Activated CD8-positive, alpha-beta T cell treated with anti-CD3 and anti-CD28 coated beads for 36 hours (primary cell): ENCODE measurements at regions of chr2 and their contacts with region 1.

Region 1: GRCh38 chr2:10434886-10435819 is 13.0 kb downstream of the ODC1 start:
- DNase-seq: peak; percentile 81
- ATAC-seq: peak; percentile 77
- H3K4me3 Mint-ChIP-seq: no peak overlapping the region
- H3K27ac Mint-ChIP-seq: no peak overlapping the region
- H3K4me1 Mint-ChIP-seq: peaks cover 11% of the 10 kb centered on the region
- H3K27me3 Mint-ChIP-seq: peaks cover 9% of the 10 kb centered on the region
- CTCF ChIP-seq: peak; percentile 88

Region 2: GRCh38 chr2:9984217-9984739 is 450.9 kb before region 1 on chr2:
- CTCF ChIA-PET with region 1: interaction called, 12 read pairs
- POLR2A ChIA-PET with region 1: no interaction called
- intact Hi-C with region 1: no loop called
- DNase-seq: peak; percentile 30
- ATAC-seq: peak; percentile 93
- H3K4me3 Mint-ChIP-seq: no peak overlapping the region
- H3K27ac Mint-ChIP-seq: no peak overlapping the region
- H3K4me1 Mint-ChIP-seq: peaks cover 12% of the 10 kb centered on the region
- H3K27me3 Mint-ChIP-seq: peaks cover 12% of the 10 kb centered on the region
- CTCF ChIP-seq: peak; percentile 91

Region 3: GRCh38 chr2:10097352-10098148 is 337.6 kb before region 1 on chr2:
- CTCF ChIA-PET with region 1: interaction called, 12 read pairs
- POLR2A ChIA-PET with region 1: no interaction called
- intact Hi-C with region 1: no loop called
- DNase-seq: peak; percentile 48
- ATAC-seq: peak; percentile 88
- H3K4me3 Mint-ChIP-seq: no peak overlapping the region
- H3K27ac Mint-ChIP-seq: no peak overlapping the region
- H3K4me1 Mint-ChIP-seq: no peaks in the 10 kb centered on the region
- H3K27me3 Mint-ChIP-seq: peaks cover 17% of the 10 kb centered on the region
- CTCF ChIP-seq: peak; percentile 91

Region 4: GRCh38 chr2:10135296-10136089 is 299.7 kb before region 1 on chr2:
- CTCF ChIA-PET with region 1: interaction called, 45 read pairs
- POLR2A ChIA-PET with region 1: interaction called, 8 read pairs
- intact Hi-C with region 1: loop called (anchors 5 kb)
- DNase-seq: no peak
- ATAC-seq: peak; percentile 25
- H3K4me3 Mint-ChIP-seq: no peak overlapping the region
- H3K27ac Mint-ChIP-seq: no peak overlapping the region
- H3K4me1 Mint-ChIP-seq: peaks cover 11% of the 10 kb centered on the region
- H3K27me3 Mint-ChIP-seq: no peaks in the 10 kb centered on the region
- CTCF ChIP-seq: no peak

Region 5: DNA sequence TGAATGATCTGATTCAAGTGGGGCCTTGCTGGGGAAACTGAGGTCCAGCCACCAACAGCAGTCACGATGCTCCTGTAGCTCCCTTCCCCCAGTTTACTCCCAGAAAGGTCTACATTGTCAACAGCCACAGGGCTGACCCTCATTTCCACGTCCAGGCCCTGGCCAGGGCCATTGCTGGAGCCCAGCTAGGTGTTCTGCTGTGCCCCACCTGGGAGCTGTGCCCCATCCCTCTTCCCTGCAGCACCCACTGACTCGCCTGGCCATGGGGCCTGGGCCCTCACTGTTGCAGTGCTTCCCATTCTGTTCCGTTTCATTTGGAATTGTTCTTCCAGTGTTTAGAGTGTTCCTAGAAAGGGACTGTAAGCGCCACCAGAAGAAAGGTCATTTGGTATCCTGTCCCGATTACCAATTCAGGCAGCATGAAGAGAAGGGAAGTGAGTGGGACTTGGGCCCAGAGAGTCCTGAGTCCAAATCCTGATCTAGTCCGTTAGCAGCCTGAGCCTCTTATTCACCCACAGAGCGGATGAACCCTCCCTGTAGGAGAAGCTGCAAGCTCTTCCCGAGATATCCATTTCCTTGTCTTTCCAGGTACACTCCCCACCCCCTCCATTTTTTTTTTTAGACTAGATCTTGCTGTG is 205.6 kb before region 1 on chr2:
- CTCF ChIA-PET with region 1: interaction called, 13 read pairs
- POLR2A ChIA-PET with region 1: no interaction called
- intact Hi-C with region 1: no loop called
- DNase-seq: no peak
- ATAC-seq: no peak
- H3K4me3 Mint-ChIP-seq: no peak overlapping the region
- H3K27ac Mint-ChIP-seq: no peak overlapping the region
- H3K4me1 Mint-ChIP-seq: peaks cover 6% of the 10 kb centered on the region
- H3K27me3 Mint-ChIP-seq: no peaks in the 10 kb centered on the region
- CTCF ChIP-seq: no peak

Region 6: DNA sequence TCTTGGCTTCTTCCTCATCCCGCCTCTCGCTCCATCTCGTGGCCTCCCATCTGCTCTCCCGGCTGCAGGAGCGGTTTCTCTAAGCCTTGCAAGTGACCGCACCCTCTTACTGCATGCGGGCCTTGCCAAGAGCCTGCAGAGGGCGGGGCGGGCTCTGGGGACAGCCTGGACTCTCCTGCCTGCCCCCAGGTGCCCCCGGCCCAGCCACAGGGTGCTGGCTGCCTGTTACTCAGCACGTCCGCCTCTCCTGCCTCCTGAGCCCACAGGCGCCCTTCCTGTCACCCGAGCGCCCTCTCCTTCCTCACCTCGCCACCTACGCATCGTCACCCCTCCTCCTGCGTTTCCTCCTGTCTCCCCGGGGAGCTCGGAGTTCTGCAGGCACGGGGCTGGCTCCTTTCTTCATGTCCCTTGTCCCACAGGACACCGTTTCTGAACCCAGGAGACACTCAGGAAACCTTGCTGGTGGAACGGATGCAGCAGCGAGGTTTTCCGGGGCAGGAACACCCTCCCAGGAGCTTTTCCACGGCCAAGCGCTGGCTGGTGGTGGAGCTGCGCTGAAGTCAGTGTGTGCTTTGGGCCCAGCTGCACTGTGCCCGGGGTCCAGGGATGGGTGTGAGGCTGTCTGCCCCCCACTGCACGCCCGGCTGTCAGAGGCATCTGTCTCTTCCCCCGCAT is 104.0 kb before region 1 on chr2:
- CTCF ChIA-PET with region 1: interaction called, 15 read pairs
- POLR2A ChIA-PET with region 1: interaction called, 3 read pairs
- intact Hi-C with region 1: no loop called
- DNase-seq: peak; percentile 92
- ATAC-seq: peak; percentile 55
- H3K4me3 Mint-ChIP-seq: peak overlapping the region; percentile 94
- H3K27ac Mint-ChIP-seq: peak overlapping the region; percentile 91
- H3K4me1 Mint-ChIP-seq: peaks cover 83% of the 10 kb centered on the region
- H3K27me3 Mint-ChIP-seq: no peaks in the 10 kb centered on the region
- CTCF ChIP-seq: no peak

Region 7: GRCh38 chr2:10424051-10424450 is 11.1 kb before region 1 on chr2:
- CTCF ChIA-PET with region 1: interaction called, 13 read pairs
- POLR2A ChIA-PET with region 1: interaction called, 3 read pairs
- intact Hi-C with region 1: no loop called
- DNase-seq: no peak
- ATAC-seq: no peak
- H3K4me3 Mint-ChIP-seq: no peak overlapping the region
- H3K27ac Mint-ChIP-seq: no peak overlapping the region
- H3K4me1 Mint-ChIP-seq: no peaks in the 10 kb centered on the region
- H3K27me3 Mint-ChIP-seq: no peaks in the 10 kb centered on the region
- CTCF ChIP-seq: no peak

Region 8: GRCh38 chr2:10548626-10549025 is 113.5 kb after region 1 on chr2:
- CTCF ChIA-PET with region 1: no interaction called
- POLR2A ChIA-PET with region 1: no interaction called
- intact Hi-C with region 1: no loop called
- DNase-seq: no peak
- ATAC-seq: no peak
- H3K4me3 Mint-ChIP-seq: no peak overlapping the region
- H3K27ac Mint-ChIP-seq: no peak overlapping the region
- H3K4me1 Mint-ChIP-seq: peaks cover 19% of the 10 kb centered on the region
- H3K27me3 Mint-ChIP-seq: peaks cover 30% of the 10 kb centered on the region
- CTCF ChIP-seq: no peak